T-cell (primary cell): ENCODE measurements at regions of chr9 and their contacts with region 1.

Region 1: DNA sequence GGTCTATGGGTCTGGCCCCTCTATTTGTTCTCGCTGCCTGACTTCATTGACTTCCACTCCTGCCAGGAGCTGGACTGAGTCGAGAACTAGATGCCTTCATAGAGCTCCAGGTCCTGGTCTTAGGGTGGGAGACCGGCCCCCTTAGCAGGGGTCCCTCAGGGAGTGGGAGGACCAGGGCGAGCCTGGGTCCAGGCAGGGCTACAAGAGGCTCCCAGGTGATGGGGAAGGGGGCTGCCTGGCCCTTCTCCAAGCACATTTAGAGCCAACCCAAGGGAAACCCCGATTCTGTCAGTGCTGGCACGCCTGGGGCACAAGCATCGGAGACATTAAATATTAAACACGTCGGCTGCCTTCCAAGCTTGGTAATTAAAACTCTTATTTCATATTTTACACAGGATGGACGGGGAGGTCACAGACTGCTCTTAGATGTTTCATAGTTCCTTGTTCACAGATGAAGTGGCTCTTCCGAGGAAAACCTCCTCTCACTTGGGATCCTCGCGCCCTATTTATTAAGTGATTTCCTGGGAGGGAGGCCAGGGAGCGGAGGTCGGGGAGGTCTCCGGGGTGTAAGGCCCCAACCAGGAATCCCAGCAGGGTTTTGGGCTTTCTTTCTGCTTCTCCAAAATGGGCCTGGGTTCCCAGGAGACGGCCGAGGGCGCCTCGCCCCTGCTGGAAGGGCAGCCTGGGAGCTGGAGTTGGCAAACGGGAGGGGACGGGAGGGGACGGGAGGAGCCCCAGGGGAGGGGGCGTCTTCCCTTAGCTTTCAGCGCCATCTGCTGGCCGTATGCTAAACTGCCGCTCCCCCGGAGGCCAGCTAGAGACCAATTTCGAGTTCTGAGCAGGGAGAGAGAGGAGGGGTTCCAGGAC is 23.4 kb upstream of the ZBTB43 start:
- DNase-seq: peak; percentile 43 to 87 (median 76)
- ATAC-seq: peak; percentile 85 to 95 (median 88)
- H3K4me3 ChIP-seq: no peak overlapping the region
- H3K4me3 Mint-ChIP-seq: no peak overlapping the region
- H3K27ac ChIP-seq: no peak overlapping the region
- H3K27ac Mint-ChIP-seq: no peak overlapping the region
- H3K4me1 ChIP-seq: peaks cover 0 to 7% of the 10 kb centered on the region in 2 experiments
- H3K4me1 Mint-ChIP-seq: no peaks in the 10 kb centered on the region
- H3K27me3 ChIP-seq: peaks cover 0 to 46% of the 10 kb centered on the region in 2 experiments
- H3K27me3 Mint-ChIP-seq: peaks cover 22 to 38% of the 10 kb centered on the region in 2 donors

Region 2: GRCh38 chr9:126704873-126705766 is 76.3 kb before region 1 on chr9:
- CTCF ChIA-PET with region 1: interaction called, 56 to 94 read pairs
- POLR2A ChIA-PET with region 1: interaction called in 1 of 2 experiments, 4 read pairs
- DNase-seq: peak; percentile 61 to 92 (median 80)
- ATAC-seq: peak; percentile 75 to 87 (median 80)
- H3K4me3 ChIP-seq: peak overlapping the region in 1 of 2 donors; percentile 7
- H3K4me3 Mint-ChIP-seq: peak overlapping the region; percentile 37 to 79 (median 56)
- H3K27ac ChIP-seq: no peak overlapping the region
- H3K27ac Mint-ChIP-seq: peak overlapping the region in 1 of 2 donors; percentile 34
- H3K4me1 ChIP-seq: peaks cover 0 to 21% of the 10 kb centered on the region in 2 experiments
- H3K4me1 Mint-ChIP-seq: peaks cover 17 to 19% (median 18%) of the 10 kb centered on the region in 3 donors
- H3K27me3 ChIP-seq: peaks cover 0 to 51% of the 10 kb centered on the region in 2 experiments
- H3K27me3 Mint-ChIP-seq: peaks cover 14 to 46% of the 10 kb centered on the region in 2 donors

Region 3: GRCh38 chr9:126796758-126797157 is 15.3 kb after region 1 on chr9:
- CTCF ChIA-PET with region 1: no interaction called
- POLR2A ChIA-PET with region 1: no interaction called
- DNase-seq: no peak
- ATAC-seq: no peak
- H3K4me3 ChIP-seq: no peak overlapping the region
- H3K4me3 Mint-ChIP-seq: no peak overlapping the region
- H3K27ac ChIP-seq: no peak overlapping the region
- H3K27ac Mint-ChIP-seq: no peak overlapping the region
- H3K4me1 ChIP-seq: no peaks in the 10 kb centered on the region
- H3K4me1 Mint-ChIP-seq: no peaks in the 10 kb centered on the region
- H3K27me3 ChIP-seq: peaks cover 6 to 21% of the 10 kb centered on the region in 2 experiments
- H3K27me3 Mint-ChIP-seq: peaks cover 13 to 25% of the 10 kb centered on the region in 2 donors